Adrenal gland (tissue), 19 donors: ENCODE measurements at regions of chr10 and their contacts with region 1.

Region 1: DNA sequence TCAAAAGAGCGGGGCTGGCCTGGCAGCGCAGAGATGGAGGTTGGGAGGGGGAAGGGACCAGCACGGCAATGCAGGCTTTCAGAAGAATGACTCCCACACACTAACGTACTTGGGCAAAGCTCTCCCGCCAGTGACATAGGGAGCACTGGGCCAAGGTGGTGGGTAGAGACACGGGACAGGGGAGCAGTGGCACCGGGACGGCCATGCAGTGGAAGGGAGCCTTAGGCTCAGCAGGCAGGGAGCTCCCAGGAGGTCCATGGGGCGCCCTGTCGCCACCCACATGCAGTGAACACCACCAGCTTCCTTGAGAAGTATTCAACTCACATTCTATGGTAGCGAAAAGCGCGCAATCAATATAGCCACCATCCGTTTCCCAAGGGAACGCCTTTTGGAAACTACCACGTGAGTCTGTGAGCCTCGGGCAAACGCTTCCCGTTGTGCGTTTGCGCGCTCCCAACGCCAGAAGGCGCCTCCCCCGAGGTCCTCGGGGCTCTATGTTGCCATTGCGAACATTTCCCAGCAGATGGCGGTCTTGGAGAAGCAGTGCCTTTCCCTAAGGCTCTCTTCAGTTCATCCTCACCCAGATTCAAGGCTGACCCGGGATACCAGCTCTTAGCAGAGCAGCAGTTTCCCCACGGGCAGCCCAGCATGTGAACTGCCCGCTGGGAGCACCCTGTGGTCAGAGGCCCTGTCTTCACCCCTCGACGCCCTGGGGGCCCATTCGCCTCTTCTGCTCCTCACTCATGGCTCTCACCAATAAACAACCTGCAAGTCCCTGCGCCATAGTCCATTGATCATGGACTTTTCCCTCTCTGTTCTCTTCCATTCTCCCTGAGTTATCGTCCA is 16.4 kb upstream of the OPALIN start:
- DNase-seq: peak; percentile 86 to 94 (median 89)
- H3K4me3 ChIP-seq: peak overlapping the region in 3 of 4 donors; percentile 18 to 58 (median 20)
- H3K27ac ChIP-seq: no peak overlapping the region
- H3K4me1 ChIP-seq: peaks cover 0 to 3% of the 10 kb centered on the region in 2 donors
- H3K27me3 ChIP-seq: no peaks in the 10 kb centered on the region
- CTCF ChIP-seq: peak; percentile 84 to 97 (median 90)
- POLR2A ChIP-seq: no peak

Region 2: DNA sequence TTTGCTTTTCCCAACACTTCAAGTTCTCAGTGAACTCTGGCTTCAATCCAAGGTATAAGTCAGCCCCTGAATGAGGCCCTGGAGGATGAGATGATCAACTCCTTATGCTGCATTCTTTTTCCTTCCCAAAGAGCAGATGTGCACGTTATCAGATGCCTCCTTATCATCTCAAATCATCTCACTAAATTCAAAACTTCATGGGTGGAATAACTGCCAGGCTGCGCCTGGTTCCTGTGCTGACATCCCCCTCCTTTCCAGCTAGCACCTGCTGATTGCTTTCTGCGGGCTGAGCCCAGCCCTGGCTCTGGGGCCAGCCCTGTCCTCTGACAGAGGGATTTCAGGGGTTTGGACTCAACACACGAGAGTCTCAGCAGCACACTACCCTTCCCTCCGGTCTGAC is 93.6 kb after region 1 on chr10:
- intact Hi-C with region 1: no loop called
- DNase-seq: no peak
- H3K4me3 ChIP-seq: no peak overlapping the region
- H3K27ac ChIP-seq: no peak overlapping the region
- H3K4me1 ChIP-seq: no peaks in the 10 kb centered on the region
- H3K27me3 ChIP-seq: peaks cover 4% of the 10 kb centered on the region
- CTCF ChIP-seq: no peak
- POLR2A ChIP-seq: no peak

Region 3: DNA sequence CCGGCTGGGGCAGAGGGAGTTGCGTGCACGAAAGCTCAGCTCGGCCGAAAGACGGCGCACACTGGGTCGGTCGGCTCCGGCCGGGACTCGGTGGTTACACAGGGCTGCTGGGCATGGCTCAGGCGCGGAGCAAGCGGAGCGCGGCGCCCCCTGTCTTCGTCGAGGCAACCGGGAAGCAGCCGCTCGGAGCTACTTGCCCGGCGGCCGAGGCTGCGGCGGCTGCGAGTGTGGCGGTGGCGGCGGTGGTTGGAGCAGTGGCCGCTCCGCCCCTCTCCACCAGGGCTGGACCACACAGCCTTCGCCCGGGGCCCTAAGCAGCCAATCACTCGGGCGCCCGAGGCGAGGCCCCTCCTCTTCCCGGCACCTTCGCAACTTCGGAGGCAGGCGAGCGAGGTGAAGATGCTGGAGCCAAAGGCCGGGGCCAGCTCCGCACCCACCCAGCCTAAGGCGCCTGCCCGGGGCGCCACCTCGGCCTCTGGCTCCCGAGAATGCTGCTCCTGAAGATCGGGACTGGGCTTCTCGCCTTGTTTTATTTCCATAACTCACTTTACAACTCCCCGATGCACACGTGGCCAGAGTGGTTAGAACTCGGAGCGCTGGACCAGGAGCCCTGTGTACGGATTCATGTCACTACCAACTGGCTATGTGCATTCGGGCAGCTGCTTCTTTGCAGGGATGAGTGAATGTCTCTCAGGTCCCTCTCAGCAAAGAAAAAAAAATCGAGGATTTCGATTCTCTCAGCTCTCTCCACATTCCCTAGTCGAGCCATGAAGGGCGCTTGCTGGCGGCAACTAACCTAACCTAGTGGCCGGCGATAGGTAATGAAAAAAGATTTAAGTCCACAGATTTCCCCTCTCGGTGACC is 138.7 kb after region 1 on chr10 and contains the start of gene TLL2:
- intact Hi-C with region 1: loop called (anchors 5 to 10 kb)
- DNase-seq: peak; percentile 86 to 92 (median 88)
- H3K4me3 ChIP-seq: peak within 1 kb of the TSS in 2 of 4 donors; percentile 26 to 70
- H3K27ac ChIP-seq: peak within 1 kb of the TSS in 1 of 5 donors; percentile 51
- H3K4me1 ChIP-seq: peaks cover 21 to 25% of the 10 kb centered on the region in 2 donors
- H3K27me3 ChIP-seq: no peaks in the 10 kb centered on the region
- CTCF ChIP-seq: peak; percentile 47 to 81 (median 66)
- POLR2A ChIP-seq: peak in 1 of 2 donors; percentile 60
- total RNA-seq, gene TLL2: 0.11 to 0.14 (median 0.14) TPM in 3 of 9 donors, not detected in the others

Region 4: GRCh38 chr10:97210543-97210961 is 835.3 kb after region 1 on chr10:
- intact Hi-C with region 1: loop called in 1 of 2 experiments (anchors 10 kb)
- DNase-seq: peak; percentile 45 to 92 (median 68)
- H3K4me3 ChIP-seq: no peak overlapping the region
- H3K27ac ChIP-seq: no peak overlapping the region
- H3K4me1 ChIP-seq: no peaks in the 10 kb centered on the region
- H3K27me3 ChIP-seq: no peaks in the 10 kb centered on the region
- CTCF ChIP-seq: peak; percentile 85 to 99 (median 92)
- POLR2A ChIP-seq: no peak